GM10248 (cell line): ENCODE measurements at regions of chr16 and their contacts with region 1.

Region 1: GRCh38 chr16:85898521-85899442 is at the start of gene IRF8:
- DNase-seq: peak; percentile 93
- CTCF ChIP-seq: no peak

Region 2: DNA sequence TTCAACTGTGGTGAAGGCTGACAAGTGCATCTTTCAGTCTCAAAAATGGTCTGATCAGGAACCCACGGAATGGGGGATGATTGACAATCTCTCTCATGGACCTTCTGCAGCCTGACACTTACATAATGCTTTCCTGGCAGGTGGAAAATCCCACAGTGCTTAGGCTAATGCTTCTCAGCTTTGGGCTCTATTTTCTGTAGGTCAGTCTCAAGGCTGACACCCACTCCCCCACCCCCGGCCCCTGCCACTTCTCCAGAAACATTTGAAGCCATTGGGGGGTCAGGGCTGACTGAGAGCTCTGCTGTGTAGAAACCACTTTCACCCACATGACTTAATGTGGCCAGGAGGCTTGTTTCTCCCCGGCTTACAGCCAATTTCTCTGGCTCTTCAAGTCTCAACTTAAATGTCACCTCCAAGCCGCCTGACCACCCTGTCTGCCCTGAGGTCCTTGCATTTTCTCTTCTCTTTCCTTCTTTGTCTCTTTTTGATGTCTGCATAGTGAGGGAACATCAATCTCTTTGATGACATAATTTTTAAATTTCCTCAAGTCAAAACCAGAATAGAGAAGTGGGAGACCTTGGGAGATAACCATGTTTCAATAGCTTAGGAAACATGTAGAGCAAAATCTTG is 16.5 kb before region 1 on chr16:
- CTCF ChIA-PET with region 1: interaction called, 7 read pairs
- POLR2A ChIA-PET with region 1: interaction called, 10 read pairs
- DNase-seq: peak; percentile 56
- CTCF ChIP-seq: no peak

Region 3: GRCh38 chr16:85916141-85916890 is 17.5 kb after region 1 on chr16:
- CTCF ChIA-PET with region 1: interaction called, 18 read pairs
- POLR2A ChIA-PET with region 1: interaction called, 10 read pairs
- DNase-seq: no peak
- CTCF ChIP-seq: no peak

Region 4: GRCh38 chr16:85928401-85928820 is 29.6 kb after region 1 on chr16:
- CTCF ChIA-PET with region 1: interaction called, 10 read pairs
- POLR2A ChIA-PET with region 1: no interaction called
- DNase-seq: no peak
- CTCF ChIP-seq: no peak

Region 5: DNA sequence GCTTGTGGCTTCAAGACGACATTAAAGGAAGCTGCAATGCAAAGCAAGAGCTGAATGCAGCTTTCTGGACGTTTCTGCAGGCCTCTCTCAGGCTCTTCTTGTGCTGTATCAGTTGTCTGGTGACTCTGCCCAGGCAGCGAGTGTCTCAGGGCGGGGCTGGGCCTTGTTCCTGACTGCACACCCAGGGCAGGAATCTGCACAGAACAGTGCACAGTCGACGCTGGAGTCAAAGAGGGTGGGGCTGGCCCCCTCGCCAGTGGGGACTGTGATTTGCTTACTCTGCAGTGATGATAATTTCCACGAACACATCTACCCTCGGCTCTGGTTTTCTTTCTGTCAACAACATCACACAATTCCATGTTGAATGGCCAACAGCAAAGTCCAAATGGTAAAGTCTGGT is 60.9 kb after region 1 on chr16:
- CTCF ChIA-PET with region 1: no interaction called
- POLR2A ChIA-PET with region 1: no interaction called
- DNase-seq: no peak
- CTCF ChIP-seq: no peak